Mucosa of descending colon (tissue), 3 donors: ENCODE measurements at regions of chr6 and their contacts with region 1.

Region 1: DNA sequence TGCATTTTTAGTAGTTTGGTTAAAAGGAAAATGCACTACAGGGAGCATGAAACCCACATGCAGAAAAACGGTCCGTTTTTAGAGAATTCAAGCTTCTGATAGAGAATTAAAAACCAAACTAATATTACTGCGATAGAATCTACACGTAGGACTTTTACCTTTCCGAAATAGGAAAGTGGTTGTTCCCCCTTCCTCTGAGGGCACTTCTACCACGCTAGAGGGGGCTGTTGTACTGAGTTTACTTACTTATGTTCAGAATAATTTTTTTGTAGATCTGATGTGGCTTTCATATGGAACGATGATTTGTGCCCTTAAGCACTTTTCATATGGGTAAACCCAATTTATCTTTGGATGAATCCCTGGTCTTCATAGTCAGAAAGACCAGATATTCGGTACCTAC is 264.3 kb upstream of the PLN start:
- DNase-seq: peak in 1 of 3 donors; percentile 41
- ATAC-seq: no peak
- H3K4me3 ChIP-seq: no peak overlapping the region
- H3K4me1 ChIP-seq: no peaks in the 10 kb centered on the region
- CTCF ChIP-seq: no peak

Region 2: GRCh38 chr6:118350881-118351430 is 67.2 kb after region 1 on chr6:
- intact Hi-C with region 1: no loop called
- DNase-seq: no peak
- ATAC-seq: no peak
- H3K4me3 ChIP-seq: no peak overlapping the region
- H3K4me1 ChIP-seq: no peaks in the 10 kb centered on the region
- CTCF ChIP-seq: no peak

Region 3: GRCh38 chr6:118401325-118401975 is 117.7 kb after region 1 on chr6:
- intact Hi-C with region 1: no loop called
- DNase-seq: no peak
- ATAC-seq: no peak
- H3K4me3 ChIP-seq: no peak overlapping the region
- H3K4me1 ChIP-seq: no peaks in the 10 kb centered on the region
- CTCF ChIP-seq: no peak

Region 4: GRCh38 chr6:118509009-118509617 is 225.3 kb after region 1 on chr6:
- intact Hi-C with region 1: loop called in 1 of 2 experiments (anchors 10 kb)
- DNase-seq: peak in 1 of 3 donors; percentile 9
- ATAC-seq: no peak
- H3K4me3 ChIP-seq: no peak overlapping the region
- H3K4me1 ChIP-seq: no peaks in the 10 kb centered on the region
- CTCF ChIP-seq: no peak

Region 5: GRCh38 chr6:118618679-118619377 is 335.1 kb after region 1 on chr6:
- intact Hi-C with region 1: loop called in 1 of 2 experiments (anchors 5 kb)
- DNase-seq: peak in 2 of 3 donors; percentile 68 to 79
- ATAC-seq: peak; percentile 85
- H3K4me3 ChIP-seq: no peak overlapping the region
- H3K4me1 ChIP-seq: peaks cover 3% of the 10 kb centered on the region
- CTCF ChIP-seq: peak; percentile 75